ENCODE measurements at regions of chr1 and their contacts with region 1.

Region 1: GRCh38 chr1:205284343-205285144 is 37.0 kb downstream of the NUAK2 start:
- DNase-seq: peak; percentile 60 to 96 (median 90)
- ATAC-seq: peak; percentile 63 to 66
- H3K4me3 Mint-ChIP-seq: peak overlapping the region; percentile 63 to 91 (median 79)
- H3K27ac Mint-ChIP-seq: peak overlapping the region; percentile 91 to 100 (median 95)
- H3K4me1 Mint-ChIP-seq: peaks cover 50 to 94% (median 86%) of the 10 kb centered on the region in 4 donors
- H3K27me3 Mint-ChIP-seq: peaks cover 0 to 3% (median 0%) of the 10 kb centered on the region in 5 donors

Region 2: GRCh38 chr1:204516180-204516879 is 768.2 kb before region 1 on chr1 and contains the start of gene MDM4:
- POLR2A ChIA-PET with region 1: interaction called, 12 read pairs
- DNase-seq: peak; percentile 75 to 96 (median 92)
- ATAC-seq: peak; percentile 71 to 78
- H3K4me3 Mint-ChIP-seq: no peak within 1 kb of the TSS
- H3K27ac Mint-ChIP-seq: peak within 1 kb of the TSS in 4 of 10 donors; percentile 21 to 99 (median 76)
- H3K4me1 Mint-ChIP-seq: peaks cover 19 to 74% (median 62%) of the 10 kb centered on the region in 4 donors
- H3K27me3 Mint-ChIP-seq: no peaks in the 10 kb centered on the region
- polyA plus RNA-seq, gene MDM4: 10.0 to 23.1 (median 10.7) TPM

Region 3: GRCh38 chr1:205141236-205142101 is 143.1 kb before region 1 on chr1:
- POLR2A ChIA-PET with region 1: no interaction called
- DNase-seq: peak; percentile 44 to 85 (median 64)
- ATAC-seq: peak; percentile 96 to 97
- H3K4me3 Mint-ChIP-seq: peak overlapping the region in 2 of 10 donors; percentile 13 to 39
- H3K27ac Mint-ChIP-seq: peak overlapping the region in 5 of 10 donors; percentile 16 to 84 (median 53)
- H3K4me1 Mint-ChIP-seq: peaks cover 3 to 19% (median 11%) of the 10 kb centered on the region in 4 donors
- H3K27me3 Mint-ChIP-seq: no peaks in the 10 kb centered on the region

Region 4: DNA sequence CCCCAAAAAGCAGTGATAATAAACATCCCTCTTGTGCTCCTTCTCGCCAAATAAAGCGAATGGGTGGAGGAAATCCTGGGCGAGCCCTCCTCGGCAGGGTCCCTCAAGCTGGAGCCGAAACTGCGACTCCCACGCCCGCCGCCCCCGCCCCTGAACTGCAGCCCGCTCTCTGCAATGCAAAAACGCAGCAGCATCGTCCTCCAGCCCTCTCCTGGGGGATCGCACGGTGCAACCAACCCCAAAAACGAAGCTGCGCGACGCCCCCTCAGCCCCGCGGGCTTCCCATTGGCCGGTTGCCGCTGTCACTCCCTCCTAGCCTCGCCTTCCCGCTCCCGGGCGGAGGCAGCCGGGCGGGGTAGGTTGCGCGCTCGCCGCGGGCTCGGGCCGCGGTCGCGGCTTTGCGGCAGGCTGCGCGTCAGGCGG is 56.9 kb before region 1 on chr1 and contains the start of gene TMCC2:
- POLR2A ChIA-PET with region 1: interaction called, 12 read pairs
- DNase-seq: peak; percentile 75 to 93 (median 82)
- ATAC-seq: peak; percentile 86 to 90
- H3K4me3 Mint-ChIP-seq: peak within 1 kb of the TSS; percentile 88 to 98 (median 93)
- H3K27ac Mint-ChIP-seq: peak within 1 kb of the TSS; percentile 55 to 95 (median 87)
- H3K4me1 Mint-ChIP-seq: peaks cover 14 to 28% (median 27%) of the 10 kb centered on the region in 4 donors
- H3K27me3 Mint-ChIP-seq: peaks cover 0 to 17% (median 0%) of the 10 kb centered on the region in 5 donors
- polyA plus RNA-seq, gene TMCC2: 0.37 to 2.0 (median 0.40) TPM

Region 5: GRCh38 chr1:205273551-205273982 is 11.0 kb before region 1 on chr1:
- POLR2A ChIA-PET with region 1: interaction called, 383 read pairs
- DNase-seq: peak; percentile 74 to 92 (median 84)
- ATAC-seq: peak; percentile 77
- H3K4me3 Mint-ChIP-seq: peak overlapping the region; percentile 50 to 87 (median 69)
- H3K27ac Mint-ChIP-seq: peak overlapping the region; percentile 55 to 97 (median 88)
- H3K4me1 Mint-ChIP-seq: peaks cover 11 to 50% (median 45%) of the 10 kb centered on the region in 4 donors
- H3K27me3 Mint-ChIP-seq: no peaks in the 10 kb centered on the region

Region 6: DNA sequence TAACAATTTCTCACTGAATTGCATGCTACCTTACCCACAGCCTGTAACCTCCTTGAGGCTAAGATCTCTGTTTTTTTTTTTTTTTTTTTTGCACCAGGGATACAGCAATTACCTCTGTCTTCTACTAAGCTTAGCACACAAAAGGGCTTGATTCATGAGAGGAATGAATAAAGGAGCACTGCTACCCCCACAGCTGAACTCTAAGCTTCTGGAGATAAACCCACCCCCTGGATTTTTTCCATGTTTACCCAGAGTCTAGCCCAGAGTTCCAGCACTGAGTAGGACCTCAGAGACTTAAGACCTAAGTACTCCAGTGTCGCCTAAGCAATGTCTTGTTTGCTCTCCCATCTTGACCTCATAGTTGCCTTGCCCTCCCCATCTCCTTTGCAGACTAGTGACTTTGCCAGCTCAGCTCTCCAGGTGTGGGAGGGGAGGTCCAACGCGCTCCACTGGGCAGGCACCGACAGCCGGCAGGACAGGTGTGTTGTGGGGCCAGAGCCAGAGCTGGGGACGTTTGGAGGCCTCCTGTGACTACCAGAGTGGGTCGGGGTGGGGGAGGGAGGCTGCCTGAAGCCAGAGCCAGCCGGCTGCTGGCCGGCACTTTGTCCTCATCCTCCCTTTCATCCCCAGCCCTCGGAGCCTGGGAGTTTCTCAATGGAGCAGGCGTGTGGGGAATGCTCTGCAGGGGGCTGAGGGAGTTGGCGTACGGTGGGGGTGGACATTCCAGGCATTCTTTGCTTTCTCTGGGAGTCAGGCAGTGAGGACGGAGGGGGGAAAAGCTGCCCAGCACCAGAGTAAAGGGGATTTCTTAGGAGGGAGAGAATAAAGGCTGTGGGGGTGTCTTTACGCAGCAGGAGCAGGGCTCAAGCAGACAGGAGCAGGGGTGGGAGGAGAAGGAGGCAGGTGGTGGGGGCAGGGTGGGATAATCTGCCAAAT is 16.6 kb after region 1 on chr1:
- POLR2A ChIA-PET with region 1: interaction called, 95 read pairs
- DNase-seq: no peak
- ATAC-seq: no peak
- H3K4me3 Mint-ChIP-seq: peak overlapping the region in 1 of 10 donors; percentile 59
- H3K27ac Mint-ChIP-seq: peak overlapping the region in 9 of 10 donors; percentile 31 to 87 (median 68)
- H3K4me1 Mint-ChIP-seq: peaks cover 25 to 77% (median 71%) of the 10 kb centered on the region in 4 donors
- H3K27me3 Mint-ChIP-seq: no peaks in the 10 kb centered on the region

Region 7: GRCh38 chr1:205313563-205314308 is 29.2 kb after region 1 on chr1:
- POLR2A ChIA-PET with region 1: interaction called, 590 read pairs
- DNase-seq: peak; percentile 29 to 75 (median 56)
- ATAC-seq: peak; percentile 76 to 87
- H3K4me3 Mint-ChIP-seq: peak overlapping the region; percentile 79 to 100 (median 95)
- H3K27ac Mint-ChIP-seq: peak overlapping the region; percentile 92 to 99 (median 98)
- H3K4me1 Mint-ChIP-seq: peaks cover 51 to 98% (median 96%) of the 10 kb centered on the region in 4 donors
- H3K27me3 Mint-ChIP-seq: no peaks in the 10 kb centered on the region

Region 8: GRCh38 chr1:205321164-205321958 is 36.8 kb after region 1 on chr1 and contains the start of gene NUAK2:
- POLR2A ChIA-PET with region 1: interaction called, 590 read pairs
- DNase-seq: peak; percentile 80 to 91 (median 84)
- ATAC-seq: peak; percentile 87 to 93
- H3K4me3 Mint-ChIP-seq: peak within 1 kb of the TSS; percentile 92 to 100 (median 98)
- H3K27ac Mint-ChIP-seq: peak within 1 kb of the TSS; percentile 83 to 99 (median 96)
- H3K4me1 Mint-ChIP-seq: peaks cover 46 to 83% (median 70%) of the 10 kb centered on the region in 4 donors
- H3K27me3 Mint-ChIP-seq: peaks cover 0 to 2% (median 0%) of the 10 kb centered on the region in 5 donors
- polyA plus RNA-seq, gene NUAK2: 14.3 to 73.6 (median 34.0) TPM